ENCODE measurements at regions of chr7 and their contacts with region 1.

Region 1: DNA sequence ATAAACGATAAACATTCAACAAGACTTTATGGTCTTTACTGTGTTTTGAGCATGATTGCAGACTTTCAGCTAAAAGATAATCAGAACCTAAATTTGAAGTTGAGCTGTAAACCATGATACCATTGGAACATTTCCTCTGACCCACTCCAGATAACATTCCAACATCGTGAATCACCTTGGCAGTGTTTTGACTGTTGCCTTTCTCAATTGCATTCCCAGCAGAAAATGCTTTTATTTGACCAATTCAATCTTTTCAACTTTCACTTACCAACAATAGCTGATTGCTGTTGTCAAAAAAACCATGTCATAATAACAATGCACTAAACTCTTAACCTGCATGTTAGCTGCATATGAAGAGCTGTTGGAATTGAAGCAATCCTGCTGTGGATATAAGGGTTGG is 165.5 kb downstream of the MDFIC start:
- DNase-seq: no peak
- ATAC-seq: peak; percentile 87

Region 2: DNA sequence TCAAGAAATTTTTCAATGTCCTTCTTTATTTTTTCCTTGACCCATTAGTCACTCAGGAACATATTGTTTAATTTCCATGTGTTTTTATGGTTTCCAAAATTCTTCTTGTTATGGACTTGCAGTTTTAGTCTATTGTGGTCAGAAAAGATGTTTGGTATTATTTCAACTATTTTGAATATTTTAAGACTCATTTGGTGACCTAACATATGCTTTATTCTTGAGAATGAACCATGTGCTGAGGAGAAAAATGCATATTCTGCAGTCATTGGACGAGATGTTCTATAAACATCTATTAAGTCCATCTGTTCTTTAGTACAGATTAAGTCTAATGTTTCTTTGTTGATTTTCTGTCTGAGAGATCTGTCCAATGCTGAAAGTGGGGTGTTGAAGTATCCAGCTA is 207.9 kb before region 1 on chr7:
- intact Hi-C with region 1: loop called (anchors 10 kb)
- DNase-seq: no peak
- ATAC-seq: no peak

Measured in left ventricle myocardium superior (tissue), 1 donor.